ENCODE measurements at regions of chr10 and their contacts with region 1.

Region 1: GRCh38 chr10:117167789-117168674 is 29.3 kb upstream of the KCNK18 start:
- DNase-seq: peak; percentile 63
- ATAC-seq: peak; percentile 90
- H3K4me3 Mint-ChIP-seq: no peak overlapping the region
- H3K27ac Mint-ChIP-seq: no peak overlapping the region
- H3K4me1 Mint-ChIP-seq: peaks cover 10% of the 10 kb centered on the region
- H3K27me3 Mint-ChIP-seq: peaks cover 92% of the 10 kb centered on the region

Region 2: GRCh38 chr10:116787893-116788665 is 380.0 kb before region 1 on chr10:
- CTCF ChIA-PET with region 1: interaction called, 10 read pairs
- DNase-seq: peak; percentile 84
- ATAC-seq: peak; percentile 83
- H3K4me3 Mint-ChIP-seq: peak overlapping the region; percentile 26
- H3K27ac Mint-ChIP-seq: peak overlapping the region; percentile 28
- H3K4me1 Mint-ChIP-seq: peaks cover 17% of the 10 kb centered on the region
- H3K27me3 Mint-ChIP-seq: peaks cover 5% of the 10 kb centered on the region

Region 3: GRCh38 chr10:116796910-116797513 is 371.0 kb before region 1 on chr10:
- CTCF ChIA-PET with region 1: interaction called, 79 read pairs
- DNase-seq: peak; percentile 74
- ATAC-seq: peak; percentile 78
- H3K4me3 Mint-ChIP-seq: no peak overlapping the region
- H3K27ac Mint-ChIP-seq: no peak overlapping the region
- H3K4me1 Mint-ChIP-seq: peaks cover 7% of the 10 kb centered on the region
- H3K27me3 Mint-ChIP-seq: peaks cover 9% of the 10 kb centered on the region

Region 4: DNA sequence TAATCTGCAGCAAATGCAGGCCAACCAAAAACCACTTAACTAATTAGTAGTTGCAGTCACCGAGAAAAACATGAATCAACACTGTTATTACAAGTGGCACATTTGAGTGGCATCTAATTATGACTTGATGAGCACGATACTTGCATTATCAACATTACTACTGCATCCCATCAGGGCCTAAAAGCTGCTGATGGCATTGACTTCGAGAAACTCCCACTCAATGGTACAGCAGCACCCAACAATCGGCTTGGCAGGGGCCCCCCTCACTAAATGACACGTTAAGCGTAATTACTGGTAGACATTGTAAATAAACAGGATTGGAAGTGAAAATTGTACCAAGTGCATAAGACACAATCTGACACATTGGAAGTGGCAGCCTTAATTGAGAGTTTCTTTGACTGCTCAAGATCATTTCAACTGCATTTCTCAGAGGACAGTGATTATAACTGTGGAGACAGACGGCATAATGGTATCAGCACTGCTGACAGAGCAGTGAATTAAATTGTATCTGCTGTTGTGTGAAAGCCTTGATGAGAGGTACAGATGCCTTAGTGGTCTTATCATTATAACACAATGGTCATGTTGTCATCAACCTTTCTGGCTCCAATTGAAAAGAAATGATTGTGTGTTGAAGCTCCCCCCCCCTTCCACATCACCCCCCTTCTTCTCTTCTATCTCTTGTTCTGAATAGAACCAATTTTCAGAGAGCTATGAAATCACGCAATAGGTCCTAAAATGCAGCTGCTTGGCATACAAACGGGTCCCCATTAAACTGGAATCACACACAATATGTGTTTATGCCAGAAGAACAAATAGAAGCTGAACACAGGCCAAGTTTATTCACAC is 206.4 kb before region 1 on chr10:
- CTCF ChIA-PET with region 1: no interaction called
- DNase-seq: no peak
- ATAC-seq: no peak
- H3K4me3 Mint-ChIP-seq: no peak overlapping the region
- H3K27ac Mint-ChIP-seq: no peak overlapping the region
- H3K4me1 Mint-ChIP-seq: no peaks in the 10 kb centered on the region
- H3K27me3 Mint-ChIP-seq: no peaks in the 10 kb centered on the region

Region 5: DNA sequence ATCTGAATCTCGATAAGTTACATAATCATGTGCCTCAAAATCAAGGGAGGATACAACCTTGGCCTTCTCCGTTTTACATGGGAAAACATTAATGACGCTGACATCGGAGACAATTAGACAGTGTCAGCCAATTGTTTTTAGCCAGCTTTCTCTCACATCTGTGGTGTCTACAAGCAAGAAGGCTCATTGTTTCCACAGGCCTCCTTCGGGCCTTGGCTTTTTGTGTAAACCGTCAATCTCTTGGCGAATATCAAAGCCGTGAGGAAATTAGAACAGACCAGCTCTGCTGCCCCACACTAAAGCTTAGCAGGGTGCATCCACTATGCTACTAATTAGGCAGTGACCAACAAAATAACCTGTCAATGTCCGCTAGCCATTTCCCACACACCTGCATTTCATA is 73.2 kb before region 1 on chr10:
- CTCF ChIA-PET with region 1: no interaction called
- DNase-seq: no peak
- ATAC-seq: no peak
- H3K4me3 Mint-ChIP-seq: no peak overlapping the region
- H3K27ac Mint-ChIP-seq: no peak overlapping the region
- H3K4me1 Mint-ChIP-seq: no peaks in the 10 kb centered on the region
- H3K27me3 Mint-ChIP-seq: no peaks in the 10 kb centered on the region

Region 6: DNA sequence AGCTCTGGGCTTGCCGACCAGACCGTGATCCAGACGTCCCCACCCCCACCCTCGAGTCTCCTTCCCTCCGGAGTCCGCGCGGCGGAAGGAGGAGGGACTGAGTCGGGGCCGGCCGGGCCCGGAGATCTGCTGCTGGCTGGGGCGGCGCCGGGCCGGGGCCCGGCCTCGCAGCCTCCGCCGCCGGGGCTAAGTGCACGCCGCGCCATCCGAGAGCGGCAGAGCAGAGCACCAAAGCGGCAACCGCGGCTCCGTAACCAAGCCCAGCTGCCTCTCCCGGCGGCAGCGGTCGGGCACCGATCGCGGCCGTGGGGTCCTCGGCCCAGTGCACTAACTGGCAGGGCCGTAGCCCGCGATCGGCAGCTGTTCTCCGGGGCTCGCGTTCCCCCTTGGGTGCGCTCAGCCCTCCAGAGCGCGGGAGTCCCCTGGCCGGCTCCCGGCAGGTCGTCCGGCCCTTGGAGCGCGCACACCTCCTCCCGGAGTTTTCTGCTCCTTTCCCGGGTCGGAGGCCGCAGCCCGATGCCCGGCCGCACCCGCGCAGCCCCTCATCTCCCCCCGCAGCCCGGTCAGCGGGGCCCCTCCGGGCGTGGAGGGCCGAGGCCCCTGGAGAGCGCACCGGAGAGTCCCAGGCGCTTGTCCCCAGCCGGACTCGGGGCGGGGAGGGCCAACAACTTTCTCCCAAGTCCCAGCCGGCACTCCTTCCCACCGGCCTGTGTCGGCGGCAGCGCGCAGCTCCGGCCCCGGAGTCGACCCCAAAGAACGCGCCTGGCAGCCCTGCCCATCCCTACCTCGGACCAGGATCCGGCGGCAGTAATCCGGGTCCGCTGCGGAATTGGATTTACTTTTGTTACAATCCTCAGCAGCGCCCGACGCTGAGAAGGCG is 30.8 kb before region 1 on chr10:
- CTCF ChIA-PET with region 1: interaction called, 20 read pairs
- DNase-seq: no peak
- ATAC-seq: no peak
- H3K4me3 Mint-ChIP-seq: no peak overlapping the region
- H3K27ac Mint-ChIP-seq: no peak overlapping the region
- H3K4me1 Mint-ChIP-seq: peaks cover 2% of the 10 kb centered on the region
- H3K27me3 Mint-ChIP-seq: peaks cover 81% of the 10 kb centered on the region

Measured in activated CD8-positive, alpha-beta memory T cell treated with anti-CD3 and anti-CD28 coated beads, Interleukin-2, amount 10 ng/mL, durations not matched to agents 7 days and 5 days (primary cell).